ENCODE measurements at regions of chr11 and their contacts with region 1.

Region 1: GRCh38 chr11:74170694-74171629 is at the starts of genes C2CD3 and PPME1:
- DNase-seq: peak; percentile 99
- H3K4me3 Mint-ChIP-seq: no peak within 1 kb of the TSS
- H3K27ac Mint-ChIP-seq: no peak within 1 kb of the TSS
- H3K4me1 Mint-ChIP-seq: peaks cover 18% of the 10 kb centered on the region
- H3K27me3 Mint-ChIP-seq: no peaks in the 10 kb centered on the region
- total RNA-seq, gene C2CD3: 22.6 to 24.7 TPM
- total RNA-seq, gene PPME1: 37.9 to 38.5 TPM

Region 2: GRCh38 chr11:73597956-73598718 is 572.8 kb before region 1 on chr11 and contains the start of gene FAM168A:
- CTCF ChIA-PET with region 1: no interaction called
- POLR2A ChIA-PET with region 1: no interaction called
- intact Hi-C with region 1: loop called (anchors 1 kb)
- DNase-seq: peak; percentile 95
- H3K4me3 Mint-ChIP-seq: peak within 1 kb of the TSS; percentile 86
- H3K27ac Mint-ChIP-seq: peak within 1 kb of the TSS; percentile 84
- H3K4me1 Mint-ChIP-seq: peaks cover 29% of the 10 kb centered on the region
- H3K27me3 Mint-ChIP-seq: no peaks in the 10 kb centered on the region
- total RNA-seq, gene FAM168A: 12.2 TPM

Region 3: GRCh38 chr11:73779084-73779902 is 391.7 kb before region 1 on chr11:
- CTCF ChIA-PET with region 1: no interaction called
- POLR2A ChIA-PET with region 1: no interaction called
- intact Hi-C with region 1: loop called (anchors 1 kb)
- DNase-seq: peak; percentile 99
- H3K4me3 Mint-ChIP-seq: peak overlapping the region; percentile 87
- H3K27ac Mint-ChIP-seq: peak overlapping the region; percentile 97
- H3K4me1 Mint-ChIP-seq: peaks cover 11% of the 10 kb centered on the region
- H3K27me3 Mint-ChIP-seq: no peaks in the 10 kb centered on the region

Region 4: GRCh38 chr11:74030723-74031676 is 140.0 kb before region 1 on chr11:
- CTCF ChIA-PET with region 1: no interaction called
- POLR2A ChIA-PET with region 1: no interaction called
- intact Hi-C with region 1: loop called (anchors 5 kb)
- DNase-seq: no peak
- H3K4me3 Mint-ChIP-seq: peak overlapping the region; percentile 57
- H3K27ac Mint-ChIP-seq: peak overlapping the region; percentile 77
- H3K4me1 Mint-ChIP-seq: peaks cover 41% of the 10 kb centered on the region
- H3K27me3 Mint-ChIP-seq: no peaks in the 10 kb centered on the region